ENCODE measurements at regions of chr9 and their contacts with region 1.

Region 1: GRCh38 chr9:112852741-112853504 is 37.8 kb downstream of the SLC46A2 start:
- DNase-seq: no peak
- ATAC-seq: no peak

Region 2: DNA sequence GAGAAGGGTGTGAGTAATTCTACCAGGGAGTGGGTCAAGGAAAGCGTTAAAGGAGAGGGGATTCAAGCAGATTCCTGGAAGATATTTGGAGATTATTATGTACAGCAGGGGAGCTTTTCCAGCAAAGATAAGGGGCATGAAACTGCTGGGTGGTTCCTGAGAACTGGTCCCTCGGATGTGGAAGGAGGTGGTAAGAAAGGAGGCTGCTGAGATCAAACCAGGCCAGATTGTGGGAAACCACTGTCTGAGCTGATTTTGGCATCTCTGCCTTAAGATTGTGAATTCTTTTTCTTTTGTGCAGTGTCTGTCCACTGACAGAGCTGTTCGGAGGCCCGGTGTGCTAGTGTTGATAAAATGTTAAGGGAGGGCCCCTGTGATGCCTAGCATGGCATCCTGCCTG is 57.0 kb before region 1 on chr9:
- intact Hi-C with region 1: no loop called
- DNase-seq: no peak
- ATAC-seq: no peak

Region 3: DNA sequence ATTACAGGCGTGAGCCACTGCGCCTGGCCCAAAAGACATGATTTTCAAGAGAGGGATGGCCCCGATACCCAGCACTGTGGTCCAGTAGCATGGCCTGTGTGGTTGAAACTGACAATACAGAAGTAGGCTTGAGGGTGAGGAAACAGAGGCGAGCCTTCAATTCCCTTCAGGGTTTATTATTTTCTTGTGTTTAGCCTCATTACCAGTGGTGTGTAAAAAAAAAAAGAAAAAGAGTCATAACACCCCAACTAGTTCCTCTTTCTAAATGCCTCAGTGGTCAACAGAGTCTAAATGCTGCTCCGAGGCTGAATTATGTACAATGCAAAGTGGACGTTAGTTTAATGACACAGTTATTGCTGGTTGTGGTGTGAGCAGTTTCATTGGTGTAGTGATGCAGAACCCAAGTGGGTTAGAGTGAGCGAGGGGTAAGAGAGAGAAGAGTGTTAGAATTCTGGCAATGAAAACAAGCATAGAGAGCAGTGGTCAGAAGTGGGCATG is 43.5 kb before region 1 on chr9:
- intact Hi-C with region 1: no loop called
- DNase-seq: no peak
- ATAC-seq: peak; percentile 69

Region 4: DNA sequence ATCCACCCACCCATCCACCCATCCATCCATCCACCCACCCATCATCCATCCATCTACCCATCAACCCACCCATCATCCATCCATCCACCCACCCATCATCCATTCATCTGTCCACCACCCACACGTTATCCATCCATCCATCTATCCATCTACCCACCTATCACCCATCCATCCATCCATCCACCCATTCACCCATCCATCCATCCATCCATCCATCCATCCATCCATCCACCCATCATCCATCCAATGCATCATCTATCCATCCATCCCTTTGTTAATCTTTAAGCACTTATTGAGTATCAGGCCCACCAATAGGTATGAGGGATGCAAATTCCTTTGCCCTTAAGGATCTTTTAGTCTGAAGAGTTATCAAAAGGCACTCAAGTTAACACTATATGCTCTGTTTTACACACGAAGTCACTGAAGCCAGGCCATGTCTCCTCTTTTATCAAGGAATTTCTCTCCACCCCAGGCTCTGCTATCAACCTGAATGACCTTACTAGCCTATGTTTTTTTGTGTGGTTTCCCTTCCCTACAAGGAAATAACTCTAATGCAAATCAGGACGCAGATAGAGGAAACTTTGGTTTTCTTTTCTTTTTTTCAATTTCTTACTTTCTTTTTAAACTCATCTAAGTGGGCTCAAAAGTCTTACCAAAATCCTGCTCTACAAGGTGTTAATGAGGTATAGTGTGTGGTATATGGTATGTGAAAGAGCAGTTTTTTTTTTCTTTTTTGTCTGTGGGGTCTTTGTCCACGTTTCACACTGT is 43.0 kb after region 1 on chr9:
- intact Hi-C with region 1: loop called (anchors 2 kb)
- DNase-seq: no peak
- ATAC-seq: no peak

Measured in sciatic nerve (tissue), 2 donors.